ENCODE measurements at regions of chr16 and their contacts with region 1.

Region 1: DNA sequence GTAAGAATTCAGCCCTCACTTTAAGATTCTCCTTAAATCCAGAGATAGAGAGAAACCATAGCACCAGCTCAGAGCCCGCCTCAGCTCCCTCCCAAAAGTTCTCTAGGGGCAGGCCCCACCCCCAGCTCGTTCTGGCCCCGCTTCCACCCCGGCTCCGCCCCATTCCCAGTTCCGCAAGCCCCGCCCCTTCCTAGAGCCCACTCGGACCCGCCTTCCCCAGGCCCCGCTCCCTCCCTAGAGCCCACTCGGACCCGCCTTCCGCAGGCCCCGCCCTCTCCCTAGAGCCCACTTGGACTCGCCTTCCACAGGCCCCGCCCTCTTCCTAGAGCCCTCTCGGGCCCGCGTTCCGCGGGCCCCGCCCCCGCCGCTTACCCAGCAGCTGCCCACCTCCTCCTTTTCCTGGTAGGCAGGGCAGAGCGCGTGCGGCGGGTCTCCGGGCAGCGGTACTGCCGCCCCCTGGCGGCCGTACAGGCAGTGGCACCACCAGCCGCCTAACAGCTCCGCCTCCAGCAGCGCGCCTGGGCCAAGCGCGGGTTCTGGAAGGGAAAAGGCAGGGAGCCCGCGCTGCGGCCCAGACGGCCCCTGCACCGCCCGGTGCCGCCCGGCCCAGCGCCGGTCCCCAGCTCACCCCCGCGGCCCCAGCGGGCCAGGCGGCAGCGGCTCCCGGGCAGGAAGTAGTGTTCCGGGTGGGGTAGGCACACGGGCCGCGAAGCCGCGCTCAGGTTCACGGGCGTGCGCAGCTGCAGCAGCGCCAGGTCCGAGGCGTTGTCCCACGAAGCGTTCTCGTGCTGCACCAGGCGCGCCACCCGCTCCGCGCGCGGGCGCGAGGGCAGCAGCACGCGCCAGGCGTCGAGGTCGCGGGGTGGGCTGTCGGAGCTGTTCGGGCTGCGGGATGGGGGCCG is 6.8 kb upstream of the PRSS8 start:
- DNase-seq: peak; percentile 99
- ATAC-seq: peak; percentile 96 to 99 (median 98)
- H3K4me3 ChIP-seq: peak overlapping the region in 9 of 10 donors; percentile 33 to 62 (median 51)
- H3K27ac ChIP-seq: peak overlapping the region in 9 of 10 donors; percentile 69 to 91 (median 82)
- H3K4me1 ChIP-seq: peaks cover 8 to 35% (median 26%) of the 10 kb centered on the region in 9 donors
- H3K27me3 ChIP-seq: peaks cover 0 to 7% (median 0%) of the 10 kb centered on the region in 7 donors
- CTCF ChIP-seq: peak; percentile 88 to 99 (median 96)

Region 2: GRCh38 chr16:30997000-30997886 is 145.1 kb before region 1 on chr16:
- intact Hi-C with region 1: loop called in 2 of 10 experiments (anchors 10 kb)
- DNase-seq: peak; percentile 74 to 90
- ATAC-seq: peak; percentile 93 to 95 (median 94)
- H3K4me3 ChIP-seq: peak overlapping the region; percentile 38 to 64 (median 60)
- H3K27ac ChIP-seq: peak overlapping the region in 9 of 10 donors; percentile 39 to 88 (median 55)
- H3K4me1 ChIP-seq: peaks cover 4 to 34% (median 16%) of the 10 kb centered on the region in 9 donors
- H3K27me3 ChIP-seq: no peaks in the 10 kb centered on the region
- CTCF ChIP-seq: no peak

Region 3: GRCh38 chr16:31073968-31074813 is 68.2 kb before region 1 on chr16 and contains the starts of genes ZNF646 and ZNF668:
- intact Hi-C with region 1: loop called in 2 of 10 experiments (anchors 1 to 5 kb)
- DNase-seq: peak; percentile 97 to 99
- ATAC-seq: peak; percentile 93 to 99 (median 96)
- H3K4me3 ChIP-seq: peak within 1 kb of the TSS; percentile 74 to 99 (median 84)
- H3K27ac ChIP-seq: peak within 1 kb of the TSS; percentile 87 to 99 (median 96)
- H3K4me1 ChIP-seq: peaks cover 2 to 33% (median 27%) of the 10 kb centered on the region in 9 donors
- H3K27me3 ChIP-seq: no peaks in the 10 kb centered on the region
- CTCF ChIP-seq: no peak
- total RNA-seq, gene ZNF646: 7.5 to 12.0 (median 8.7) TPM
- total RNA-seq, gene ZNF668: 3.6 to 8.2 (median 4.5) TPM

Region 4: DNA sequence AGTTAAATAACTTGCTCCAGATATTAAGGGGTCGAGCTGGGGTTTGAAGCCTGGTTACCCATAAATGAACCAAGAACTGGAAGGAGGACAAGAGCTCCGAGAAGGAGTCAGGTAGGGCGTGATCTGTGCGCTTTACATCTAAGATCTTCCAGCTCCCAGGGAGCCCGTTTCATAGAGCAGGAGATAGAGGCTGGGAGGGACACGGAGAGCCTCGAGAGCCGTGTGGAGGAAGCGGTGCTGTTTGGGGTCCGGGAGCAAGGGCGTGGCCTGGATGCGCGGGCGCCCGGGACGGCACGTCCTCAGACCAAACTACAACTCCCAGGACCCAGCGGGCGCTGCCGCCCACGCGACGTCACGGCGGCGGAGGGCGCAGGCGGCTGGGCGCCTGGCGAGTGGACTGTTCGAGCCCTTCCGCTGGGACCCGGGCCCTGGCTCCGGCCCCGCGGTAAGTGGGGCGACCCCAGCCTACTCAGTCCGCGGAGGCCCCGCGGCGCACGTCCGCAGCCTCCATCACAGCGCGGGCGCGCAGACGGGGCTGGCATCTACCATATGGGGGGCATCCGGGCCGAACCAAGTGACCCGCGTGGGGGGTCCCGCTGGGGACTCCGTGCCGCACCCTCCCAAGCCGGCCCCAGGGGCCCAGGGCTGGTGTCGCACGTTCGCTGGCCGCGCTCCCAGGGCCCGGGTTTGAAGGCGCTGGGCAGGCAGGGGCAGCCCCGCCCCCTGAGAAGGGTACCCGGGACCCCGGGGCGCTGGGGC is 34.1 kb before region 1 on chr16 and contains the start of gene BCKDK:
- intact Hi-C with region 1: loop called in 5 of 10 experiments (anchors 2 to 5 kb)
- DNase-seq: peak; percentile 70 to 85
- ATAC-seq: peak; percentile 72 to 91 (median 82)
- H3K4me3 ChIP-seq: peak within 1 kb of the TSS; percentile 81 to 100 (median 98)
- H3K27ac ChIP-seq: peak within 1 kb of the TSS; percentile 85 to 99 (median 96)
- H3K4me1 ChIP-seq: peaks cover 15 to 47% (median 29%) of the 10 kb centered on the region in 9 donors
- H3K27me3 ChIP-seq: no peaks in the 10 kb centered on the region
- CTCF ChIP-seq: no peak
- total RNA-seq, gene BCKDK: 62.8 to 90.9 (median 74.7) TPM

Region 5: DNA sequence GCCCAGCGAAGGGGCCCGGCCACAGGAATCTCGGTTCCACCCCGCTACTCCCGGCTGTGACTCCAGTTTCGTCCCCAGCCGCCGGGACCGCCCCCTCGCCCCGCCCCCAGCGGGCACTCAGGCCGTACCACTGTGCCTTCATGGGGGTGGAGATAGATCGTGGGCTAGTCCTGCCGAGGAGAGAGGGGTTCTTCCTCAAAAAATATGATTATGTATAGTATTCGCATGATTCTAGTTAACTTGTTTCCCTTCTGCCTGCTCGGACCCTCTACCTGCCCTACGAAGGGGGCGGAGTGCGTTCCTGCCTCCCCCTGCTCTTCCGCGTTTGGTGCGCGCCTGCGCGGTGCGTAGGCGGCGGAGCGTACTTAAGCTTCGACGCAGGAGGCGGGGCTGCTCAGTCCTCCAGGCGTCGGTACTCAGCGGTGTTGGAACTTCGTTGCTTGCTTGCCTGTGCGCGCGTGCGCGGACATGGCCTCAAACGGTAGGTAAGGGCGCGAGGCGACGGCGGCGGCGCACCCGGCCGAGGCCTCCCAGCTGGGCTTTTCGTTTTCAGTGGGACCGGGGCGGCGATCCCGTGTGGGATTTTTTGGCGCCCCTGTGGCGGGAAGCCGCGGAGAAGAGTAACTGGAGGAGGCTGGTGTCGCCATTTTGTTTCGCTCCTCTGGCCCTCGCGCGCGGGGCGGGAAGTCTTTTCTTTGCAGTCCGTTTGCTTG is 37.5 kb after region 1 on chr16 and contains the start of gene FUS:
- intact Hi-C with region 1: loop called in 3 of 10 experiments (anchors 2 to 5 kb)
- DNase-seq: peak; percentile 90 to 92
- ATAC-seq: peak; percentile 84 to 93 (median 90)
- H3K4me3 ChIP-seq: peak within 1 kb of the TSS; percentile 71 to 94 (median 83)
- H3K27ac ChIP-seq: peak within 1 kb of the TSS; percentile 89 to 99 (median 94)
- H3K4me1 ChIP-seq: peaks cover 10 to 57% (median 42%) of the 10 kb centered on the region in 9 donors
- H3K27me3 ChIP-seq: no peaks in the 10 kb centered on the region
- CTCF ChIP-seq: no peak
- total RNA-seq, gene FUS: 127 to 174 (median 140) TPM

Region 6: GRCh38 chr16:31206776-31207175 is 64.4 kb after region 1 on chr16:
- intact Hi-C with region 1: no loop called
- DNase-seq: no peak
- ATAC-seq: no peak
- H3K4me3 ChIP-seq: no peak overlapping the region
- H3K27ac ChIP-seq: no peak overlapping the region
- H3K4me1 ChIP-seq: peaks cover 0 to 20% (median 11%) of the 10 kb centered on the region in 9 donors
- H3K27me3 ChIP-seq: peaks cover 0 to 4% (median 0%) of the 10 kb centered on the region in 7 donors
- CTCF ChIP-seq: no peak

Measured in heart right ventricle (tissue), 16 donors.